ENCODE measurements at regions of chr18 and their contacts with region 1.

Region 1: DNA sequence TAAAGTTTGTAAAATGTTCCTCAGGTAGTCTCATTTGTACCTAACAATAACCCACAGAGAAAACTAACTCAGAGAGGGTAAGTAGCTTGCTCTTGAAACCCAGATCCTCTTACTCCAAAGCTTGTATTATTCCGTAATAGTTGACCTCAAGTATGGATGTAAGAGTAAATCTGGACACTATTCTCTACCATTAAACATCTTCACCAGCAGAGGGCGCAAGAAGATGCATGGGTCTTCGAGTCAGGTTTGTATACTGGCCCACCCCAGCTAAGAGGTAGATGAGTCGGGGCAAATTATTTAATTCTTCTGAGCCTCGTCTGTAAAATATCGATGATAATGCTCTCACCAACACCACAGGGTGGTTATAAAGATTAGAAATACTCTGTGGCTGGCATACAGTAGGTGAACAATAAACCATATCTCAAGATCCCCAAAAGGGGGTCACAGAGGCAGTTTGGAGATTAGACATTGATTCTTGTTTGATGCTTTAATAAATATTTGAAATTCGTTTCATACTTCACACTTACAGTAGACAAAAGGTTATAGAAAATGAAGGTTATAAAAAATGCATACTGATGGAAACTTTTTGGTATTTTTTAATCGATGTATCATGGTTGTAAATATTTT is 3.5 kb upstream of the CABLES1 start:
- DNase-seq: peak; percentile 35
- H3K4me3 Mint-ChIP-seq: no peak overlapping the region
- H3K27ac Mint-ChIP-seq: no peak overlapping the region
- H3K4me1 Mint-ChIP-seq: peaks cover 20% of the 10 kb centered on the region
- H3K27me3 Mint-ChIP-seq: peaks cover 22% of the 10 kb centered on the region

Region 2: DNA sequence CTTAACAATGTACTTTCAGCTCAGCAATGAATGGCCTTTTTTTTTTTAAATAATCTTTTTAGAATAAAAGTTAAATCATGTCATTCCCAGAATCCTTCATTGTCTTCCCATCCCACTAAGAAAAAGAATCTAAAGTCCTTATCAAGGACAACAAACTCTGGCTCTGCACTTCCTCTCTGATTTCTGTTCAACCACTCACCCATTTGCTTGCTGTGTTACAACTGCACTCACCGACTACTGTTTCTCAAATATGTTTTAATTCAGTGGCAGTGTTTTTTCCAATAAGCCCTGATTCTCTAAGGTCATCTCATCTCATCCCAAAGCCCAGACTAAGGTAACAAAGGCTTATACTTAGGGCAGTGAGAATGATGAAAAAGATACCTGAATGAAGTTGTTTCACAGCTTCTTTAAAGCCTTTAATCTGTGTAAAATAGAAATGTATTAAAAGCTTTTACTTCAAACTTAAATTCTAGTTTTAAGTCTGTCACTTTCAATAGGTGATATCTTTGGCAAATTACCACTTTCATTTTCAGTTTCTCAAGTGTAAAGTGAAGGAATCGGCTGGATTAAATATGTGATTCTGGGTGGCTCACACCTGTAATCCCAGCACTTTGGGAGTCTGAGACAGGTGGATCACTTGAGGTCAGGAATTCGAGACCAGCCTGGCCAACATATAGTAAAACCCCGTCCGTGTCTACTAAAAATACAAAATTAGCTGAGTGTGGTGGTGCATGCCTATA is 111.1 kb before region 1 on chr18:
- intact Hi-C with region 1: loop called (anchors 10 kb)
- DNase-seq: no peak
- H3K4me3 Mint-ChIP-seq: peak overlapping the region; percentile 68
- H3K27ac Mint-ChIP-seq: no peak overlapping the region
- H3K4me1 Mint-ChIP-seq: peaks cover 10% of the 10 kb centered on the region
- H3K27me3 Mint-ChIP-seq: no peaks in the 10 kb centered on the region

Region 3: GRCh38 chr18:23209031-23209430 is 77.2 kb after region 1 on chr18:
- intact Hi-C with region 1: loop called (anchors 2 kb)
- DNase-seq: no peak
- H3K4me3 Mint-ChIP-seq: no peak overlapping the region
- H3K27ac Mint-ChIP-seq: peak overlapping the region; percentile 68
- H3K4me1 Mint-ChIP-seq: peaks cover 6% of the 10 kb centered on the region
- H3K27me3 Mint-ChIP-seq: no peaks in the 10 kb centered on the region

Region 4: DNA sequence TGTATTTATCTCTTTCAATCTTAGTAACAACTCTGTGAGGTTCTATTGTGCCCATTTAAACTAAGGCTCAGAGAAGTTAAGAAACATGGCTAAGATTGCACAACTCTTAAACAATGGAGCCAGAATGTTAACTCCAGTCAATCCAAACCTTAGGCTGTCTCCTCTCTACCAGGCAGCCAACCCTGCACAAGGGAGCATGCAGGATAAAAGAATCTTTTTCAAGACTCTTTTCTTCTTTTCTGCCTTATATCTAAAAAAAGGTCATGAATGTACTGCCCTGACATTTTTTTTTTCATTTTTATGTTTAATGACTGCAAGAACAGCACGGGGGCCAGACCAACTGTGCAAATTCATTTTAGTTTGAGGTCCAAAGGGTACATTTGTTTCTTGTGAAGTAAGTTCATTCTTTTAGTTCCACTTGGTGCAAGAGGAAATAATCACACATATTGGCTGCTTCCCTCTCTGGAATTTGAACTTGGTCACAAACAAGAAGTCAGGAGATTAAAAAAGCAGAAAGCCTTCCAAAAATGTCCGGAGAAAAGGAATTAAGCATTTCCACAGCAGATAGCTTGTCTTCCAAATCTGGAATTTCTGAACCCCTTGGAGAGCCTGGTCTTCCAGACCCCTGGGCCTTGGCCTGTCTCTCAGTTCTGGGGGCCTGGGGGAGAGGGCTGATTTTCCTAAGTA is 225.3 kb after region 1 on chr18:
- intact Hi-C with region 1: loop called (anchors 1 kb)
- DNase-seq: no peak
- H3K4me3 Mint-ChIP-seq: no peak overlapping the region
- H3K27ac Mint-ChIP-seq: no peak overlapping the region
- H3K4me1 Mint-ChIP-seq: peaks cover 21% of the 10 kb centered on the region
- H3K27me3 Mint-ChIP-seq: no peaks in the 10 kb centered on the region

Region 5: DNA sequence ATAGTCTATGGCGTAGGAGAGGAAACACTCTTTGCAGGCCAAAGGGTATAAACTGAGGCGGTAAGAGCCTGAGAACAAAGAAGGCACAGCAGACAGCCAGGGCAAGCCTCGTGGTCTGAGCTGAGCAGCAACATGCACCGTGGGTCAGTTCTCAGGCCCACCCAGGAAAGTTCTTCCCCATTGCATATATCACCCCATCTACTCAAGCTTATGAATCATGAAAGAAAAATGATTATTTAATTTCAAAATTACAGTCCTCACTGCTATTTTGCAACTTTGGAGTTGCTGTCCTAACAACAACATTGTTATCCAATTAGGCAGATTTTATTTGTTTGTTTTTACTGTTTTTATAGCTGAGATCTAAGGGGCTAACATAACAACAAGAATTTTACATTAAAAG is 266.6 kb after region 1 on chr18:
- intact Hi-C with region 1: loop called (anchors 5 kb)
- DNase-seq: no peak
- H3K4me3 Mint-ChIP-seq: no peak overlapping the region
- H3K27ac Mint-ChIP-seq: no peak overlapping the region
- H3K4me1 Mint-ChIP-seq: peaks cover 25% of the 10 kb centered on the region
- H3K27me3 Mint-ChIP-seq: no peaks in the 10 kb centered on the region

Region 6: DNA sequence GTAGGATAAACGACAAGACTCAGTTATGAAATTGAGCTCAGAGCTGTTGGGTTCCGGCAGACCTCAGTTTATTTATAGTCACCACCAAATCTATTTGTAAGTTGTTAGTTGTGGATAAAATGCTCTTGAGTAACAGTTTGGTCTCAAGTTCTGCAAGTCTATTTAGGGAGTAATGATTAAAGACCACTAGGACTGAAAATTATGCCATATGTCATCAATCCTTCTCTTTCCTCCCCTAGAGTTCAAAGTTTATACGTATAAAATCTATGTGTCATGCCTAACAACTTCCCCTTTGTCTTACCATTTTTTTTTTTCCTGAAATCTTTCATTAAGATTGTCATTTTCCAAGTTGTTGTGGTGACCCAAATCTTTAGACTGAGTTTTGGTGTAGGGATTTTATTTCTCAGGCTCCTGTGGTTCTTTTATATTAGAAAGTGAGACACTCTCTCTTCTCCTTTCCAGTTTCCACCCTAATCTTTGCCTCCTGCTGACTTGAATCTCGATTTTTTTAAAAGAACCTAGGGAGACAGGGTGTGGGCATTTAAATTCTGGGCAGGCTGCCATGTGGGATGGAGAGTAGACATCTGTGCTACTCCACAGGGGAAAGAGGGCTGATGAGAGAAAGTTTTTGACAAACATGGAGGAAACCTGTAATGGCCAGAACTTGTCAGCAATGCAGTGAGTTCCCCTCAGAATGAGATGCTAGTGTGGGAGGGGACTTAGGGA is 608.5 kb after region 1 on chr18:
- intact Hi-C with region 1: no loop called
- DNase-seq: no peak
- H3K4me3 Mint-ChIP-seq: no peak overlapping the region
- H3K27ac Mint-ChIP-seq: no peak overlapping the region
- H3K4me1 Mint-ChIP-seq: peaks cover 16% of the 10 kb centered on the region
- H3K27me3 Mint-ChIP-seq: peaks cover 47% of the 10 kb centered on the region

Measured in activated T-helper 1 cell treated with anti-CD3 and anti-CD28 coated beads, Interleukin-12 subunit alpha, Interleukin-12 subunit beta, Interleukin-2, Interleukin-4 antibody, amounts not matched to agents 30 ng/mL and 10 ng/mL and 1 ng/mL, durations not matched to agents 14 hours and 24 hours and 36 hours (primary cell).